ENCODE measurements at regions of chr2 and their contacts with region 1.

Region 1: DNA sequence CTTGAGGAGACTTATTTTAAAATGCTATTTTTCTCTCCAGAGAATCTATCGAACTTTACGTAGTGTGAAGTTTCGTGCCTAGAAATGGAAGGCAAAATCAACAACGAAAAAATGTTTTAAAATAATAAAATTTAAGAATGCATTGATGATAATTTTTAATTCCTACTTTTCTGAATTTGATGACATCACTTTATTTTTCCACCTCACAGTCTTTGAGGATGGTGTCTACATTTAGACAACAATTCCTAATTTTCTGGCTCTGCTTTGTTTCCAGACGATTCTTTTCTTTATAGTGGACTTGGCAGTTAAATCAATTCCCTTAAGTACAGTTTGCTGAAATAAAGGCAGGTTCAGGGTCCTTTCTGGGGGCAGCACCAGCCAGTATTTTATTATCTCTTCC is 298.4 kb downstream of the NUP35 start:
- DNase-seq: no peak
- H3K4me3 ChIP-seq: no peak overlapping the region
- H3K27ac ChIP-seq: no peak overlapping the region
- H3K4me1 ChIP-seq: no peaks in the 10 kb centered on the region
- H3K27me3 ChIP-seq: no peaks in the 10 kb centered on the region
- CTCF ChIP-seq: no peak
- EP300 ChIP-seq: no peak
- POLR2A ChIP-seq: no peak

Region 2: GRCh38 chr2:183383854-183384253 is 38.8 kb before region 1 on chr2:
- intact Hi-C with region 1: loop called in 1 of 4 experiments (anchors 1 kb)
- DNase-seq: no peak
- H3K4me3 ChIP-seq: no peak overlapping the region
- H3K27ac ChIP-seq: no peak overlapping the region
- H3K4me1 ChIP-seq: no peaks in the 10 kb centered on the region
- H3K27me3 ChIP-seq: no peaks in the 10 kb centered on the region
- CTCF ChIP-seq: no peak
- EP300 ChIP-seq: no peak
- POLR2A ChIP-seq: no peak

Region 3: DNA sequence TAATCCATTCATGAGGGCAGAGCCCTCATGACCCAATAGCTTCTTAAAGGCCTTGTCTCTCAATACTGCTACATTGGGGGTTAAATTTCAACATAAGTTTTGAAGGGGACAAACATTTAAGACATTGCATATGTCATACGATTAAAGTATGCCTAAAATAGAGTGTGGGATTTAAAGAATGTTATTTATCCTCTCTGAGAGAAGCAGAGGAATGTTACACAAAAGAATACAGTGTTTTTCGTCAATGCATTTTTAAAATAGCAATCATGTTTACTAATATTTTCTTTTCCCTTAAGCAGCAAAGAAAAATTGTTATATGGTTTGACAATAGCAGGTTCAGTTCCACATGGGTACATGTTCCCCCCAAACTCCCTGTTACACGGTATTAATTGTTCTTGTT is 64.7 kb after region 1 on chr2:
- intact Hi-C with region 1: no loop called
- DNase-seq: no peak
- H3K4me3 ChIP-seq: no peak overlapping the region
- H3K27ac ChIP-seq: no peak overlapping the region
- H3K4me1 ChIP-seq: no peaks in the 10 kb centered on the region
- H3K27me3 ChIP-seq: no peaks in the 10 kb centered on the region
- CTCF ChIP-seq: no peak
- EP300 ChIP-seq: no peak
- POLR2A ChIP-seq: no peak

Measured in ovary (tissue), 10 donors.